ENCODE measurements at regions of chr3 and their contacts with region 1.

Region 1: DNA sequence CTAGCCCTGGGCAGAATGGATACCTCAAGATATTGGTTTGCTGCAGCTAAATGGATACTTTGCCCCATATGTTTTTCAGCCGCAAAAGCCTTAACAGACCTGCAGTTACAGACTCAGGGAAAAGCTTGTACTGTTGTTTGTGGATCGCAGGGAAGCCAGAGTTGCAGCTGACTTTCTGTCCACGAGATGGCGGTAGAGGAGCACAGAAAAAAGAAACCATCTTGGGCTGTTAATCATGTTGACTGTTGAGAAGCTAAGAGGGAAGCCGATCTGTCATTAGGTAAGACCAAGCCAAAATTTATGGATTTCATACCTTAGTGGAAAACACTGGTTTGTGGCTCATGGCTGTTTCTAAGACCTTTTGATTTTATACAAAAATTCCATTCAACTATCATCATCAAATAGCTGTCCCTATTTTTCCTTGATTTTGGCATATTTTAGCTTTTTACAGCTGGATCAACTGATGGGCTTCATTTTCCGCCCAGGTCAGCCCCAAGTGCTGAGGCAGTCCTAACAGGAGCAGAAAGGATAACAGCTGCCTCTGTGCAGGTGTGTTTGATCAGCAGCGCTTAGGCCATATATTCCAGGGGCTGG is 205.7 kb upstream of the ZPLD1 start:
- DNase-seq: peak; percentile 27
- CTCF ChIP-seq: peak; percentile 92

Region 2: GRCh38 chr3:101803173-101803782 is 425.9 kb before region 1 on chr3:
- CTCF ChIA-PET with region 1: interaction called, 443 read pairs
- POLR2A ChIA-PET with region 1: no interaction called
- DNase-seq: peak; percentile 67
- CTCF ChIP-seq: peak; percentile 79

Region 3: DNA sequence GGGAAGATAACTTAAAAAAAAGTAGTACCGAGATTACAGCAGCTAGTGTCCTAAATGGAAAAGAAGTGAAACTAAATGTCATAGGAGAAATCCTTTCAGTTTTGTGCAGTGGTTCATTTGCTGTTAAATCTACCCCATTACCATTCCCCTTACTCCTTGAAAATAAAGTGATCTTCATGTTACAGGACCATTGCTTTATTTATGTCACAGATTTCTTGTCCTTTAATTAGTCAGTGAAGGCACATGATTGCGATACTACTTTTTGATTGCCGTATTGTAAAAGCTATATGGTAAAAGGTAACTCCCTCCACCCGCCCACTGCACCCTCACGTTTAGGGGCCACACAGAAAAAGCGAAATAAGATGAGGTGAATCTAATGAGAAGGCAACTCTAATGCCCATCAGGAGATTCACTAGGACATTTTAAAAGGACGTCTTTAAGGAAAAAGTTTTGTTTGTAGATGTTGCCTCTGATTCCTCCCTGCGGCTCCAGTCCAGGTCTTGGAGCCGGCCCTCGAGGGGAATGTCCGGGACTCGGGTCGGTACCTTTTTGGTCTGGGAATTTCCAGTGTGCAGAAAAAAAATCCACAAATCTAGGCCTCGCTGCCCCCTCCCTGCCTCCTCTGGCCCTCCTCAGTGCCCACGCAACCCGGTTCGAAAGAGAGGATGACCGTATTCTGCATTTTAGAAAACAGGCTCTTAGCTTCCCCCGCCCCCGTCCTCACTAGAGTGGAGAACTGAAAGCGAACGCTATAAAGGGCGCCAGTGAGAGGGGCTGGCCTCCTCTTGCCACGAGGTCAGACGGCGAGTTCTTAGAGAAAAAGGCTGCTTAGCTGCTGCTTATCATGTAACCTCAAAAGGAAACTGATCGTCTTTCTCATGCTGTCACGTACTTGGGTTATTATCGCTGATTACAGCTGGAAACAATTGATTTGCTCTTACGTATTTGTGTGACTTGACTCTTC is 401.7 kb before region 1 on chr3:
- CTCF ChIA-PET with region 1: interaction called, 13 read pairs
- POLR2A ChIA-PET with region 1: no interaction called
- DNase-seq: peak; percentile 80
- CTCF ChIP-seq: no peak

Region 4: GRCh38 chr3:102174312-102174712 is 54.8 kb before region 1 on chr3:
- CTCF ChIA-PET with region 1: interaction called, 16 read pairs
- POLR2A ChIA-PET with region 1: no interaction called
- DNase-seq: no peak
- CTCF ChIP-seq: no peak

Region 5: GRCh38 chr3:102248981-102249705 is 20.0 kb after region 1 on chr3:
- CTCF ChIA-PET with region 1: interaction called, 108 read pairs
- POLR2A ChIA-PET with region 1: no interaction called
- DNase-seq: no peak
- CTCF ChIP-seq: no peak

Region 6: GRCh38 chr3:102353804-102354203 is 124.6 kb after region 1 on chr3:
- CTCF ChIA-PET with region 1: no interaction called
- POLR2A ChIA-PET with region 1: no interaction called
- DNase-seq: no peak
- CTCF ChIP-seq: no peak

Region 7: DNA sequence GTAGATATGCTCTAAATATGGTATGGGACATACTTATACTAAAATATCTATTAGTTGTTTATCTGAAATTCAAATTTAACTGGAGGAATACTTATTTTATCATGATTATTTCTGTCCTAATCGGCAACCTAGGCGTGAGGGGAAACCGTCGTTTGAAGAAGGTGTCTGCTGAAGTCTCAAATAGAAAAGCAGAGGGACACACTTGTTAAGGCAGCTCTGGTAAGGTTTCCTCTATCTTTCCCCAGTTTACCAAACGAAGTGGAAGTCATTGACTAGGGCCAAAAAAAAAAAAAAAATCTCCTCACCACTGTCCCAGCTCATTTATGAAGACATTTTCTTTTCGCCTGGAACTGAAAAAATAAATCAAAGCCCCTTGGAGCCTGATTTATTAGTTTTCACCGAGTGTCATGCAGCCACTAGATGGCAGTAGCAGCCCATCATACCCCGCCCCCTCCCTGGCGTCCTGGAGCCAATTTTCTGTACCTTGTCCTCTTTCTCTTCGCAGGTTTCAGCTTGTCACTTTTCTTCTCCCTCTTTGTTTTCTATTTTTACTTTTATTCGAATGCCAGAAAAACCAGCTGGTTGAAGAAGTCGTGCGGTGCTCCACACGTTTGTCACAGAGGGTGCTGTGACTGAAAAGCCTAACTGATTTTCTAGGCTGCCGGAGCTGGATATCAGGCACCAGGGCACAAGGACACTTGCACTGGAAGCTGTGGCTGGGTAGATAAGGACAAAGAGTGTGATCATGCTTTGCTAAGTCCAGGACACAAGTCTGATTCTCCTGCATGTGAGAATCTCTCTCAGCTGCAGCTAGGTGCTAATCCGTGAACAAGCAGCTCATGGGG is 444.3 kb after region 1 on chr3:
- CTCF ChIA-PET with region 1: interaction called, 28 read pairs
- POLR2A ChIA-PET with region 1: no interaction called
- DNase-seq: peak; percentile 56
- CTCF ChIP-seq: peak; percentile 89

Measured in GM10248 (cell line).